ENCODE measurements at regions of chr15 and their contacts with region 1.

Region 1: DNA sequence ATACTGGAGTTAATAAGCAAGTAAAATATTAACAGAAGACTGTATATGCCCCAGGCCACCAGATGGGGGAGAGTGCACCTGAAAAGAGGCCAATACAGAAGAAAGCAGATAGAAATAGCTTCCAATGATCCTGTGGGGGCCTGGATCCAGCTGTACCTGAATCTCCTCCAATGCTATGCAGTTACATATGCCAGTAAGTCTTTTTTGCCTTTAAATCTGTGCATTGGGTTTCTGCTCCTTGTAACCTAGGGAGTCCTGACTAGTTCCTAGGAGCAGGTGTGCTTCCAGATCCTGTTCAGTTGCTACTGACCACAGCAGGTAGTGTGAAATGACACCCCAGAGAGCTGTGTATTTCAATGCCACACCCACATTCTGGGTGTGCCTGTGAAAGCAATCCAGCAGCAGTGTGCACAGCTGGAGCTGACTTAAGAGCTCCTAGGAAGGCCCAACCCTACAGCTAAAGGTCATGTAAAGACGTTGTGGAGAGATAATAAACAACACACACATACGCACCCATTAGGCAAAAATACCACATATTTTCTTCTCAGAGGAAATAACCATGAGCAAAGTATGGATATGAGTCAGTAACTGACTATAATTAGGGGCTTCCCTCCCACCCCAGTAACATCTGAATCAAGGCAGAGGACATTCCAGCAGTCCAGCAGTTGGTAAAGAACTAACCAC is 62.2 kb upstream of the AKAP13 start:
- DNase-seq: no peak
- ATAC-seq: peak; percentile 87
- H3K4me3 Mint-ChIP-seq: peak overlapping the region; percentile 69
- H3K27ac Mint-ChIP-seq: peak overlapping the region; percentile 87
- H3K4me1 Mint-ChIP-seq: peaks cover 74% of the 10 kb centered on the region
- H3K27me3 Mint-ChIP-seq: no peaks in the 10 kb centered on the region
- CTCF ChIP-seq: no peak

Region 2: DNA sequence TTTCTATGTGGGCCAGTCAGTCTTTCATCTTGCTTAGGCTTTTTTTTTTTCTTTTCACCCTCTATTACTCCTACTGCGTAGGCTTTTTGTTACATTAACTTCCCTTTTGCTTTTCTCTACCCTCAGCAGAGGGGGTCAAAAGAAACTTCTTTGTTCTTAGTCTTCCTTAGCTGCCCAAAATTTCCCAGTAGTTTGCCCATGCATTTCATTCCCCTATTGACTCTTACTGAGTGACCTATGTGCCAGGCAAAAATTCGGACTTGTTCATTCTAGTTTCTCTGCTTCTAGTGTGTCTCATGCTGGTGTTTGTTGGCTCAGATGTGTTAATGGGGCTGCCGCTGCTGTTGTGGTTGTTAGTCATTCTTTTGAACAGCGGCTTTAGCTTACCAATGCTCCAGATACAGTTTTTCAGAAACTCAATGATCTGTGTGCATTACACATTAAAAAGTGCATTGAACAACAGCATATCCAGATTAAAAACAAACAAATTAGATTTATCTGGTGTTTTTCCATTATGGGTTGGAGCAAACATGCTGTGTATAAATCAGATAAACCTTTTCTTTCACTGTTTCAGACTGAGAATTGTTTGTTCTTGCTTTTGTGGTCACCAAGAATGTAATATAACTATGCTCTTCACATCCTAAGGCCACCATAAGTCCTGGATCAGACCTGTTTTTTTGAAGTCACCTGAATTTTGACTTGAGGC is 293.5 kb before region 1 on chr15:
- CTCF ChIA-PET with region 1: no interaction called
- POLR2A ChIA-PET with region 1: no interaction called
- intact Hi-C with region 1: no loop called
- DNase-seq: no peak
- ATAC-seq: no peak
- H3K4me3 Mint-ChIP-seq: no peak overlapping the region
- H3K27ac Mint-ChIP-seq: no peak overlapping the region
- H3K4me1 Mint-ChIP-seq: peaks cover 30% of the 10 kb centered on the region
- H3K27me3 Mint-ChIP-seq: no peaks in the 10 kb centered on the region
- CTCF ChIP-seq: no peak

Region 3: DNA sequence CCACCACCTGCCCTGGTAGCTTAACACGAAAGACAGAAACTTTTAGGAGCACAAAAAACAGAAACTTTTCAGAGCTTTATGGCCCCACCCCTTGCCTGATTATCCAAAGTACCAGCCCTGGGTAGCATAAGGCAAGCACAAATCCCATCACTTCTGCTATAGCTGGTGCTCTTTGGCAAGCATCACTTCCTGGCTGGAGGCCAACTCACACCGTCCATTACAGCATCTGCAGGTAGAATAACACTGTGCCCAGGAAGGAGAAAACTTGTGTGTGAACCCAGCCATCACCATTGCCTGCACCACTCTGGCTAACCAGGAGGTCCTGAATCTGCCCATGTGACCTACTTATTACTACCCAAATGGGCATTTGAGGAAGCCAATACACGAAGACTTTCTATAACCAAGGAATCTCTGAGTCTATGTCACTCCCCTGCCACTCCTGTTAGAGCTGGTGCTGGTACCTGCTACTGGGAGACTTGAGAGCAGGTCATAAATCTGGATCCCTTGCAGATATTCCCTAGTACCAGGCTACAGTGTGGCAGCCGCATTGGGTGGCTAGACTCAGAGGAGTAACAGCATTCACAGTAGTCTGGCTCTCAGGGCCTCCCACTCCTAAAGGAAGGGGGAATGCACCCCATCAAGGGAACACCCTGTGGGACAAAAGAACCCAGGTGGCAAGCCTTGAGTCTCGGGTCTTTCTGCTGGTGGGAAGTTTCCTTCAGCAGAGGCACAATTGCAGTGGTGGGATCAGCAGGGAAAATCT is 11.1 kb before region 1 on chr15:
- CTCF ChIA-PET with region 1: no interaction called
- POLR2A ChIA-PET with region 1: interaction called, 409 read pairs
- intact Hi-C with region 1: no loop called
- DNase-seq: no peak
- ATAC-seq: no peak
- H3K4me3 Mint-ChIP-seq: no peak overlapping the region
- H3K27ac Mint-ChIP-seq: peak overlapping the region; percentile 61
- H3K4me1 Mint-ChIP-seq: peaks cover 68% of the 10 kb centered on the region
- H3K27me3 Mint-ChIP-seq: no peaks in the 10 kb centered on the region
- CTCF ChIP-seq: no peak

Region 4: DNA sequence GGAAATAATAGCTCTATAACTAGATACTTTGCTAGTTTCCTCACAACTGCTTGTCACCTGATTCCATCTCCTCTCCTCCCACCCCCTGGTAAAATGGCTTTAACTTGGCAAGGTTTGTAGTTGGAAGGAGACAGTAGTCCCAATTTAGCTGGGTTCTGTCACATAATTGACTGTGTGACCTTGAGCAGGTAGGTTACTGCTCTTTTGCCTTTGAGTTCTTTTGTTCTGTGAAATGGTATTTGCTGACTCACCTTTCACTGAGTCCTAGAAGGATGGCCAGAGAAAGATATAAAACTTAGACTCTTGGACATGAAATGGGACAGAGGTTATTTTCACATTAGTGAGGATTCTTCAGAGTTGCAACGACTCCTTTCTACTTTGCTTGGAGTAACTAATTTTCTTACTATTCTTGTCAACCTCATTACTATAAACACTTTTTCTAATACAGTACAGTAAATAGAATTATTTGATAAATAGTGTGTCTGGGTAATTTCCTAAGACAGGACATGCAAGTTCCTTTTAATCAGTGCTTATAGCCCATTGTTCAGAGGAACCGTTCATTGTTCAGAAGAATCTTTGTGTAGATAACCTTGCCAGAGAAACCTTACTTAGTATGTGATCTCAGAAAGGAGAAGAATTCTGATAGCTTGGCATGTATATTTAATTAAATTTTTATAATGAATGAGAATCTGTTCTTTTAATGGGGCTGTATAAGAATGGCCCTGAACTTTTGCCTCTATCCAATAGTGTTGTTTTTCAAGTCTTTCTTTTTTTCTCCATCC is 76.6 kb after region 1 on chr15:
- CTCF ChIA-PET with region 1: no interaction called
- POLR2A ChIA-PET with region 1: interaction called, 11 read pairs
- intact Hi-C with region 1: no loop called
- DNase-seq: no peak
- ATAC-seq: no peak
- H3K4me3 Mint-ChIP-seq: no peak overlapping the region
- H3K27ac Mint-ChIP-seq: no peak overlapping the region
- H3K4me1 Mint-ChIP-seq: peaks cover 61% of the 10 kb centered on the region
- H3K27me3 Mint-ChIP-seq: no peaks in the 10 kb centered on the region
- CTCF ChIP-seq: no peak

Region 5: GRCh38 chr15:85456798-85457197 is 138.6 kb after region 1 on chr15:
- CTCF ChIA-PET with region 1: no interaction called
- POLR2A ChIA-PET with region 1: no interaction called
- intact Hi-C with region 1: loop called (anchors 2 kb)
- DNase-seq: no peak
- ATAC-seq: peak; percentile 69
- H3K4me3 Mint-ChIP-seq: no peak overlapping the region
- H3K27ac Mint-ChIP-seq: peak overlapping the region; percentile 88
- H3K4me1 Mint-ChIP-seq: peaks cover 90% of the 10 kb centered on the region
- H3K27me3 Mint-ChIP-seq: no peaks in the 10 kb centered on the region
- CTCF ChIP-seq: no peak

Region 6: GRCh38 chr15:85607141-85607806 is 289.1 kb after region 1 on chr15:
- CTCF ChIA-PET with region 1: no interaction called
- POLR2A ChIA-PET with region 1: no interaction called
- intact Hi-C with region 1: no loop called
- DNase-seq: no peak
- ATAC-seq: no peak
- H3K4me3 Mint-ChIP-seq: no peak overlapping the region
- H3K27ac Mint-ChIP-seq: no peak overlapping the region
- H3K4me1 Mint-ChIP-seq: peaks cover 5% of the 10 kb centered on the region
- H3K27me3 Mint-ChIP-seq: no peaks in the 10 kb centered on the region
- CTCF ChIP-seq: no peak